ENCODE measurements at regions of chr14 and their contacts with region 1.

Region 1: DNA sequence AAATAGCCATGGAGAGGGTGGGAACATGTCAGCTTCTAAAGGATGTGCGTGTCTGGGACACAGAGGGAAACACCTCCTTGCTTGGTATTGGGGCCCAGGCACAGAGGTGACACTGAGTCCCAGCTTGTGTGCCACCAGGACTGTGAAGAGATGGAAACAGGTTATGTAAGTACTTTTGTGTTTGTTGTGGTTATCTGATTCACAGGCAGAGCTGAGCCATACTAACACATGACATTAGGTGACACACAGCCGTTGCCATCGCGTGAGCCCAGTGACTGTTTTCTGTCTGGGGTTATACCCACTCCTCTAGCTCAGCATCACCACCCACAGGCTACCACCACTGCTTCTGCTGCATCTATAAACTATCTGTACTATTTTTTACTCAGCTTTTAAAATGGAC is 12.1 kb upstream of the FLVCR2 start:
- DNase-seq: peak; percentile 94
- H3K4me3 Mint-ChIP-seq: peak overlapping the region; percentile 72
- H3K27ac Mint-ChIP-seq: peak overlapping the region; percentile 93
- H3K4me1 Mint-ChIP-seq: peaks cover 90% of the 10 kb centered on the region
- H3K27me3 Mint-ChIP-seq: no peaks in the 10 kb centered on the region

Region 2: GRCh38 chr14:74793506-74794168 is 772.7 kb before region 1 on chr14:
- CTCF ChIA-PET with region 1: no interaction called
- POLR2A ChIA-PET with region 1: no interaction called
- intact Hi-C with region 1: no loop called
- DNase-seq: no peak
- H3K4me3 Mint-ChIP-seq: no peak overlapping the region
- H3K27ac Mint-ChIP-seq: peak overlapping the region; percentile 54
- H3K4me1 Mint-ChIP-seq: peaks cover 36% of the 10 kb centered on the region
- H3K27me3 Mint-ChIP-seq: no peaks in the 10 kb centered on the region

Region 3: DNA sequence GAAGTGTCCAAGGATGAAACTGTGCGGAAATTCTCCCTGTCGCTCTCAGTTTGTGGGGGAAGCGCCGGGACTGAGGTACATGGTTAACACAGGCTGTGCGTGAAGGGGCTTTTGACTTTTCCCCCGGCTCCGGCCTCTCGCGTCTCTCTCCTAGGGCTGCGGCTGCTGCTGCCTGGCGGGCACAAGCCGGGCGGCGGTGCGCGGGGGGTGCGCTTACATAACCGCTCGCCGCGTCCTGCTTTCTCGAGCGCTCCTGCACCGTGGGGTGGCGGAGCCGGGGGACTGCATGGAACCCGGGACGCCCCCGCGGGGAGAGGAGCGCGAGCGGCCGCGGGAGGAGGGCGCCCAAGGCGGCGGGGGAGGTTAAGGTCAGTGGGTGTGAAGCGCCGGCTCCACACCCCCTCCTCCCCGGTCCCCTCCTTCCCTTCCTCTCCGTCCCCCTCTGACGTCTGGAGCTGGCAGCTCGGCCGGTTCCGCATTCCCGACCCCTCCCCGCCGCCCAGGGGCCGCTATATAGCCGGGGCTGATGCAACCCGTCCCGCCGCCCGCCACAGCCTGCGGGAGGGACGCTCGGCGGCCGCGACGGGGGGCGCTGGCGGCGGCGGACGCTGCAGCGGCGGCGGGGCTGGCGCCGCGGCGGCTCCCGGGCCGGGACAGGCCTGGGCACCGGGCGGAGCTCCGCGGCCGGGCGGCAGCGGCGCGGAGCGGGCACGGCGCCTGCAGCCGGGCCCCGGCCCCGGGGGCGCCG is 138.7 kb before region 1 on chr14 and contains the start of gene JDP2:
- CTCF ChIA-PET with region 1: interaction called, 4 read pairs
- POLR2A ChIA-PET with region 1: no interaction called
- intact Hi-C with region 1: loop called (anchors 5 kb)
- DNase-seq: peak; percentile 55
- H3K4me3 Mint-ChIP-seq: peak within 1 kb of the TSS; percentile 70
- H3K27ac Mint-ChIP-seq: no peak within 1 kb of the TSS
- H3K4me1 Mint-ChIP-seq: peaks cover 12% of the 10 kb centered on the region
- H3K27me3 Mint-ChIP-seq: peaks cover 19% of the 10 kb centered on the region
- total RNA-seq, gene JDP2: 1.7 to 1.8 TPM

Region 4: GRCh38 chr14:75542588-75543091 is 23.7 kb before region 1 on chr14:
- CTCF ChIA-PET with region 1: interaction called, 91 read pairs
- POLR2A ChIA-PET with region 1: interaction called, 76 read pairs
- intact Hi-C with region 1: loop called (anchors 1 kb)
- DNase-seq: peak; percentile 95
- H3K4me3 Mint-ChIP-seq: peak overlapping the region; percentile 68
- H3K27ac Mint-ChIP-seq: peak overlapping the region; percentile 99
- H3K4me1 Mint-ChIP-seq: peaks cover 83% of the 10 kb centered on the region
- H3K27me3 Mint-ChIP-seq: no peaks in the 10 kb centered on the region

Region 5: DNA sequence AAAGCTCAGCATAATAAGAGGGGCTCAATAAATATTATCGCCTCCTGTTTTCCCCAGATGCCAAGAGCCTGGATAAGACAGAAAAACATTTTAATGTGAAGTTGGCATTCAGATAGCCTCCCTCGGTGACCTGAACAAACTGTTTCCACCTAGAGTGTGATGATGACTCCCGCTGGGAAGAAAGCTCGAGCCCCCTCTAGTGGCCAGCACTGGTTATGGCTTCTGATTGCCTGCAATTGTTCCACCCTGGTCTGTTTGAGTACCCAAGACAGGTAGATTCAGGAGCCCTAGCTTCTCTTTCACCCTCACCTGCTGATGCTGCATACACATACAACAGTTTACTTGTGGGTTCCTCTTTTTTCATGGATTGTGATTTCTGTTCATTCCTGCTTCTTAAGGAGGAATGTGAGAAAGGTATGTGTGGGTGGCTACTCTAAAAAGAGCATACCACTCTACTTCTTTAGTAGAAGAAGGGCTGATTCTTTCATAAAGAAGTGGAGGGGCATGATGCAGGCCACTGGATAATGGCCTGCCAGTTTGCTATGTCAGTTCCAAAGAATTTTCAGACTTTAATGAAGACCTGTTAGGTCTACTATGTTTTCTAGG is 87.9 kb after region 1 on chr14:
- CTCF ChIA-PET with region 1: interaction called, 336 read pairs
- POLR2A ChIA-PET with region 1: no interaction called
- intact Hi-C with region 1: no loop called
- DNase-seq: peak; percentile 89
- H3K4me3 Mint-ChIP-seq: no peak overlapping the region
- H3K27ac Mint-ChIP-seq: no peak overlapping the region
- H3K4me1 Mint-ChIP-seq: peaks cover 16% of the 10 kb centered on the region
- H3K27me3 Mint-ChIP-seq: no peaks in the 10 kb centered on the region

Measured in activated CD4-positive, alpha-beta memory T cell treated with anti-CD3 and anti-CD28 coated beads for 36 hours (primary cell).